Right cardiac atrium (tissue), 5 donors: ENCODE measurements at regions of chr22 and their contacts with region 1.

Region 1: GRCh38 chr22:35749808-35750207 is 32.1 kb downstream of the APOL5 start:
- DNase-seq: no peak
- ATAC-seq: no peak
- H3K4me3 ChIP-seq: no peak overlapping the region
- H3K27ac ChIP-seq: no peak overlapping the region
- H3K4me1 ChIP-seq: peaks cover 4% of the 10 kb centered on the region
- H3K27me3 ChIP-seq: no peaks in the 10 kb centered on the region

Region 2: DNA sequence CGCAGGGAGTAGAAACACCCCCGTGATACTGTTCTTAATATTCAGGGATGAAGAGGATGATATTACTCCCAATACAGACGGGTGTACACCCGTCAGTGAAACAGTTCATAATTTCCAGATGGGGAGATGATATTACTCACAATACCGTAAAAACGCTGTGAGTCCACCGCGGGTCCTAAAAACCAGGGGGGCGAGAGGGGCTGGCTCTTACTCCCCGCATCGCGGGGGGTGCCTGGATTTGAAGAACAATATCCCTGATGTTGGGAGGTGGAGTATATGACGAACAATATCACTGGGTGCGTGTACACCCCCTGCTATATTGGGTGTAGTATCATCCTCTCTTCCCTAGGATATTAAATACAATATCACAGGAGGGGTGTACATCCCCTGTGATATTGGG is 52.7 kb before region 1 on chr22:
- intact Hi-C with region 1: no loop called
- DNase-seq: no peak
- ATAC-seq: no peak
- H3K4me3 ChIP-seq: no peak overlapping the region
- H3K27ac ChIP-seq: no peak overlapping the region
- H3K4me1 ChIP-seq: no peaks in the 10 kb centered on the region
- H3K27me3 ChIP-seq: no peaks in the 10 kb centered on the region

Region 3: DNA sequence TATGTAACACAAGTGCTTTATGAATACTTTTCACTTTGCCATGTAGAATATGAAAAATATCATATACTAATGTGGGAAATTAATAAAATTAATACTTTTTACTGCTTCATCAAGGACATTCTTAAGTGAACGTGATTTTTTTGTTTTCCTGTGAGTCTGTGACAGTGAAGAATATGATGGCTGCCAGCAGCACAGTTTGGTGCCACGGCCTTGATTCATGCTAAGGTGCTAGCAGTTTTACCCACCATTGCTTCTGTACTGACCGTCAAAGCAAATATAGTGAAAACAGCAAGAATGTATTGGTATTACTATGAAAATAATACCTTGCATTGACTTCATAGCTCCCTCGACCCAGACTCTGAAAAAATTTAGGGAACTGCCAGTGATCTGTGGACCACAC is 47.6 kb after region 1 on chr22:
- intact Hi-C with region 1: no loop called
- DNase-seq: no peak
- ATAC-seq: no peak
- H3K4me3 ChIP-seq: no peak overlapping the region
- H3K27ac ChIP-seq: no peak overlapping the region
- H3K4me1 ChIP-seq: peaks cover 4% of the 10 kb centered on the region
- H3K27me3 ChIP-seq: no peaks in the 10 kb centered on the region

Region 4: GRCh38 chr22:35840302-35840739 is 90.5 kb after region 1 on chr22:
- intact Hi-C with region 1: loop called in 1 of 4 experiments (anchors 10 kb)
- DNase-seq: peak; percentile 88 to 92 (median 92)
- ATAC-seq: peak; percentile 91 to 95
- H3K4me3 ChIP-seq: peak overlapping the region; percentile 78
- H3K27ac ChIP-seq: peak overlapping the region; percentile 79
- H3K4me1 ChIP-seq: peaks cover 3% of the 10 kb centered on the region
- H3K27me3 ChIP-seq: no peaks in the 10 kb centered on the region

Region 5: DNA sequence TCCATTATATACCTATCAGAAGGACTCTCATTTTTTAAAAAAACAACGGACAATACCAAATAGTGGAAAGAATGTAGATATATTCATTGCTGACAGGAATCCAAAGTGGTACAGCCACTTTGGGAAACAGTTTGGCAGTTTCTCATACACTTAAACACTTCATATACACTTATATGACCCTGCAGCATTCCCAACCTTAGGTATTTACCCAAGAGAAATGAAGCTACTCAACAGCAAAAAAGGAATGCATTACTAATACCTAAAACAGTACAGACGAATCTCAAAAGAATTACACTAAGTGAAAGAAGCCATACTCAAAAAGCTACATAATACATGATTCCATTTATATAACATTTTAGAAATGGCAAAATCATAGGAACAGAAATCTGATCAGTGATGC is 227.3 kb after region 1 on chr22:
- intact Hi-C with region 1: no loop called
- DNase-seq: no peak
- ATAC-seq: no peak
- H3K4me3 ChIP-seq: no peak overlapping the region
- H3K27ac ChIP-seq: no peak overlapping the region
- H3K4me1 ChIP-seq: peaks cover 6% of the 10 kb centered on the region
- H3K27me3 ChIP-seq: no peaks in the 10 kb centered on the region